ENCODE measurements at regions of chr17 and their contacts with region 1.

Region 1: DNA sequence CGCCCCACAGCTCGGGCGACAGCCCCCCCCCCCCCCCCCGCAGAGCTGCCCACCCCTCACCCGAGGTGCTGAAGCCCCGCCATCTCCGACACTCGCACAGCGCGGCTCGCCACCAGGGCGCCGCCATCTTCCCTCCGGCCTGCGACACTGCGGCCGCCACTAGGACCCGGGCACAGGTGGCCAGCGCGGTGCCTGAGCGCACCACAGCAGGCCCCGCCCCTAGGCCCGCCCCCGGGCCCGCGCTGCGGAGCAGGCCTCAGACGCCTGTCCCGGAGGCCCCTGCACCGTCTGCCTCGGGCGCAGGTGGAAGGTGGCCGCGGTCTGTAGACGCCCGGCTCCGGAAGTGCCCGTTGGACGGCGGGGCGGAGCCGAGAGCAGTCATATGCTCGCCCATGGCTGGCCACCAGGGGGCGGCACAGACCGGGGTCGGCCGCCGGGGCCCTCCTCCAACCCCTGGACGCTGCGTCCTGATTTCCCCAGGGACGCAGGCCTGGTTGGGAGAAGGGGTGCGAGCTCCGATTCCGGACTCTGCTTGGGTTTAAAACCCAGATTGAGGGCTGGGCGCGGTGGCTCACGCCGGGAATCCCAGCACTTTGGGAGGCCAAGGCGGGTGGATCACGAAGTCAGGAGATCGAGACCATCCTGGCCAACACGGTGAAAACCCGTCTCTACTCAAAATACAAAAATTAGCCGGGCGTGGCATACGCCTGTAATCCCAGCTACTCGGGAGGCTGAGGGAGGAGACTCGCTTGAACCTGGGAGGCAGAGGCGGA is at the start of gene MRPL38:
- DNase-seq: peak; percentile 96
- H3K4me3 Mint-ChIP-seq: peak within 1 kb of the TSS; percentile 99
- H3K27ac Mint-ChIP-seq: peak within 1 kb of the TSS; percentile 84
- H3K4me1 Mint-ChIP-seq: peaks cover 12% of the 10 kb centered on the region
- H3K27me3 Mint-ChIP-seq: no peaks in the 10 kb centered on the region
- total RNA-seq, gene MRPL38: 151 and 160 TPM in 2 replicates

Region 2: GRCh38 chr17:75877752-75878173 is 27.2 kb before region 1 on chr17:
- intact Hi-C with region 1: loop called (anchors 2 kb)
- DNase-seq: peak; percentile 71
- H3K4me3 Mint-ChIP-seq: peak overlapping the region; percentile 93
- H3K27ac Mint-ChIP-seq: peak overlapping the region; percentile 95
- H3K4me1 Mint-ChIP-seq: peaks cover 32% of the 10 kb centered on the region
- H3K27me3 Mint-ChIP-seq: peaks cover 16% of the 10 kb centered on the region

Region 3: DNA sequence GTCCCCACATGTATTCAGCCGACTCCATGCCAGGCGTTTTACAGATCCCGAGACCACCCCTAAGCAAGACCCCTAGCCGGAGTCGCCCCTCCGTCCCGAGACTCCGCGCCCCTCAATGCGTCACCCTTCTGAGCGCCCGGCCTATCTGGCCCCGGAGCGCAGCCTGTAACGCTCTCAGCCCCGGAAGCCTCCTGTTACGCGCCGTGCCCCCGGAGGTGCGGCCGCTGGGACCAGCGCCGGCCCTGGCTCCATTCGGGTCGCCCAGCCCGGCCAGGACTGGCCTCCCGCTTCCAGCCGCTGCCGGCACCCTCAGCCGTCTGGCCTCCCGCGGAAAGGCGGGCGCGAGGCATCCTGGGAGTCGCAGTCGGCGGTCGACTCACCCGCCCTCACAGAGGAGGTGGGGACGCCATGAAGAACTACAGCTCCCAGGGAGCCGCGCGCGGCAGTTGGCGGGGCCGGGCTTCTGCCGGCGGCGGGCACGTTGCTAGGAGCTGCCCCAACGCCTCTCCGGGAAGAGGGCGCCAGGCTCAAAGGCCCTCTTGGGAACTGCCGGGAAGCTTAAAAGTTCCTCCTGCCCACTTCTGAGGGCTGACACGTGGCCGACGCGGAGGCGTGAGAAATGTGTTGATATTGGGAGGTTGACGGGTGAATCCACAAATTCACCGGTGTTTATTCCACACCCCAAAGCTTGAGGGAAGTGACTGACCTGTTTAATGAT is 35.9 kb after region 1 on chr17 and contains the start of gene FBF1:
- intact Hi-C with region 1: loop called (anchors 1 kb)
- DNase-seq: peak; percentile 88
- H3K4me3 Mint-ChIP-seq: peak within 1 kb of the TSS; percentile 88
- H3K27ac Mint-ChIP-seq: peak within 1 kb of the TSS; percentile 50
- H3K4me1 Mint-ChIP-seq: peaks cover 13% of the 10 kb centered on the region
- H3K27me3 Mint-ChIP-seq: no peaks in the 10 kb centered on the region
- total RNA-seq, gene FBF1: 19.4 and 20.0 TPM in 2 replicates

Region 4: DNA sequence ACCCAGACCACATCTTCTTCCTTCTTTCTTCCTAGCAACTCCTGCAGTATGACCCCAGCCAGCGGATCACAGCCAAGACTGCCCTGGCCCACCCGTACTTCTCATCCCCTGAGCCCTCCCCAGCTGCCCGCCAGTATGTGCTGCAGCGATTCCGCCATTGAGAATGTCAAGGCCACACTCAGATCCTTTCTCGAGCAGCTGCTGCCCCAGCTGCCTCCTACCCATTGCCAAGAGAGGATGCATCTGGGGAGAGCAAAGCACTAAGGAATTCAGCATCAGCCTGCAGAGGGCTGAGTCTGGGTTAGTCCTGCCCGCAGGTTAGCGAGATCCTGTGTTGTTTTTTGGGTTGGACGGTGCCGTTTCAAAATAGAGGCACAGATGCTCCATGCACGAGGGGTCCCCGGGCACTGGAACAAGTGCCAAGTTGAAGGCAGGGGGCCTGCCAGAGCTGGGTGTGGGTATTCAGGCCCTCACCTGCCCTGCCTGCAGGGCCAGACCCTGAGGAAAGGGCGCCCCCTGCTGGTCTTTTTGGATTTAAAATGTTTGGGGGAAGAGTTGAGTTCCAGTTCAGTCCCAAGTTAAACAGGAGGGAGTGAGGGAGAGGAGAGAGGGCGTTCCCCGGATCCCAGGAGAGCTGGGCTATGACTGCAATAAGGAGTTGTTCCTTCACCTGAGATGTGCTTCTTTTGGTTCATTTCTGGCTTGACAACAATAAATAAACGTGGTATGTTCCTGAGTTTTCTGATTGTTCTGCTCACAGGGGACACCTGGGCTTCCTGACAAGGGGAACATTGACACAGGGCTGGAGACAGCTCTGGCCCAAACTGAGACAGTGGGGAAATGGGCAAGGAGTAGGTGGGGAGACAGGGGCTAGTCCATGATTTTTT is 100.6 kb after region 1 on chr17:
- intact Hi-C with region 1: loop called (anchors 1 kb)
- DNase-seq: peak; percentile 75
- H3K4me3 Mint-ChIP-seq: no peak overlapping the region
- H3K27ac Mint-ChIP-seq: no peak overlapping the region
- H3K4me1 Mint-ChIP-seq: peaks cover 4% of the 10 kb centered on the region
- H3K27me3 Mint-ChIP-seq: peaks cover 2% of the 10 kb centered on the region

Region 5: GRCh38 chr17:76296186-76296585 is 391.3 kb after region 1 on chr17:
- intact Hi-C with region 1: loop called (anchors 1 kb)
- DNase-seq: no peak
- H3K4me3 Mint-ChIP-seq: no peak overlapping the region
- H3K27ac Mint-ChIP-seq: no peak overlapping the region
- H3K4me1 Mint-ChIP-seq: peaks cover 5% of the 10 kb centered on the region
- H3K27me3 Mint-ChIP-seq: no peaks in the 10 kb centered on the region

Measured in activated T-helper 1 cell treated with anti-CD3 and anti-CD28 coated beads, Interleukin-12 subunit alpha, Interleukin-12 subunit beta, Interleukin-2, Interleukin-4 antibody, amounts not matched to agents 30 ng/mL and 10 ng/mL and 1 ng/mL, durations not matched to agents 14 hours and 24 hours and 36 hours (primary cell).